A549 (cell line): ENCODE measurements at regions of chr9 and their contacts with region 1.

Region 1: DNA sequence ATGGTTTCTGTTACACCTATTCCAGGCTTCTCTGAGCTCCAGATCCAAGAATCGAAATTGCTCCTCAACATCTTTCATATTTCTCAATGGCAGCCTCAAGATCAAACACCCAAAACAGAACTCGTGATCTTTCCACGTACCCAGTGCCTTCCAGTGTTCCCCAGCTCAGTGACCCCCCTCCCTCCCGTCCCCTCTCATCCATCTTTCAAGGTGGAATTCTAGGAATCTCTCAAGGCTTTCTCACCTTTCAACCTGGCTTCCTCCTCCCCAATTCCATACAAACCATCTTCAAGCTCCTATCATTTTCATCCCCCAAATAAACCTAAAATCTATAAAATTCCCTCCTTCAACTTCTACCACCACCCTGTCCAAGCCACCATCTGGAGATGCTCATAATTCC is 615.3 kb downstream of the BNC2 start:
- DNase-seq: no peak
- ATAC-seq: no peak
- H3K4me3 ChIP-seq: no peak overlapping the region
- H3K27ac ChIP-seq: peak overlapping the region in 1 of 2 experiments; percentile 28; a peak in 1 of 6 replicates
- H3K4me1 ChIP-seq: no peaks in the 10 kb centered on the region
- CTCF ChIP-seq: no peak
- EP300 ChIP-seq: no peak
- POLR2A ChIP-seq: no peak
- RAD21 ChIP-seq: no peak

Region 2: DNA sequence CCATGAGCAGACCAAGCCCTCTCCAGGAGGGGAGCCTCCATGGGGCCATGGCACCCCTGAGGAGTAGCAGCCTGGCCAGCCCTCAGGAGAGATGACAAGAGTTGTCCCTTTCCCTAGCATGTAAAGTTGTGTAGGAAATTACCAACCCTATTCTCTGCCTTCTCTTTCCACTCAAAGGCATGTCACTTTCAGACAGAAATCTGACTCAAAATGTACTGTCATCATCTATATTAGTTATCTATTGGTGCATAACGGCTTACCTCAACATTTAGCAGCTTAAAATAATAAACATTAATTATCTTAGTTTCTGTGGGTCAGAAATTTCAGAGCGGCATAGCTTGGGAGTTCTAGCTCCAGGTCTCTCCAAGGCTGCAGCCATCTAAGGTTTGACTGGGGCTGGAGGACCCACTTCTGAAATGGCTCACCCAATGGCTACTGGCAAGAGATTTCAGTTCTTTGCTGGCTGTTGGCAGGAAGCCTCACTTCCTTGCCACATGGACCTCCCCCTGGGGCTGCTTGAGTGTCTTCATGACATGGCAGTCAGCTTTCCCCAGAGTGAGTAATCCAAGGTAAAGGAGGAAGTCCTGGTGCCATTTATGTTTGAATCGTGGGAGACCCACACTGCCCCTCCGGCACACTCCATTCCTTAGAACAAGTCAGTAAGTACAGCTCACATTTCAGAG is 70.1 kb before region 1 on chr9:
- CTCF ChIA-PET with region 1: no interaction called
- POLR2A ChIA-PET with region 1: no interaction called
- DNase-seq: peak in 1 of 2 experiments; percentile 17
- ATAC-seq: no peak
- H3K4me3 ChIP-seq: no peak overlapping the region
- H3K27ac ChIP-seq: no peak overlapping the region
- H3K4me1 ChIP-seq: no peaks in the 10 kb centered on the region
- CTCF ChIP-seq: no peak
- EP300 ChIP-seq: no peak
- POLR2A ChIP-seq: no peak
- RAD21 ChIP-seq: no peak

Region 3: DNA sequence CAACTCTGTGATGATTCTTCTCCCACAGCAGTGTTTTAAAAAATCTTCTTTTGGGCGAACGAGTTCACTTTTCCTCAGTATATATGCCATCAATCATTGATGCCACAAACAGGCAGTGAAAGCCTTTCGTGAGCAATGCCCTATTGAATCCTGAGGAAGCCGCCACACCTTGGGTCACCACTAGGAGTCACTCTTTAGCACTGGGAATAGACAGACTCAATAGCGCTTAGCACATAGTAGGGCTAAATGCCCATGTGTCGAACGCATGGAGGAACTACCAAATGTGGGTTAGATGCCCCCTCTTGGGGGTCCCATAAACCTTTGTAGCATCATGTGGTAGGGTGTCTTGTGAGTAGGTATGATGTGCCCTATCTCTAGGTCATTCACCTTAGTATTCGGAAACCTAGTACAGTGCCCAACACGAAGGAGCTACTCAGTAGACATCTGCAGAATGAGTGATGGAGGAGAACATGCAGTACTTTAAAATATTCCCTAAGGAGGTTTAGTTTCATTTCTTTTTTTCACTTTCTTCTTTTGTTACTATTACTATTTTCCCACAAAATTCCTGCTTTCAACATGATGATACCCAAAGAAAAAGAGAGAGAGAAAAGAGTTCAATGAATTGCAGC is 11.5 kb after region 1 on chr9:
- CTCF ChIA-PET with region 1: interaction called, 17 read pairs
- POLR2A ChIA-PET with region 1: no interaction called
- DNase-seq: peak in 1 of 2 experiments; percentile 45
- ATAC-seq: peak in 1 of 2 experiments; percentile 60; a peak in 3 of 6 replicates
- H3K4me3 ChIP-seq: no peak overlapping the region
- H3K27ac ChIP-seq: peak overlapping the region; percentile 57 to 80
- H3K4me1 ChIP-seq: peaks cover 30% of the 10 kb centered on the region
- CTCF ChIP-seq: peak; percentile 63
- EP300 ChIP-seq: no peak
- POLR2A ChIP-seq: no peak
- RAD21 ChIP-seq: peak; percentile 53 to 61

Region 4: DNA sequence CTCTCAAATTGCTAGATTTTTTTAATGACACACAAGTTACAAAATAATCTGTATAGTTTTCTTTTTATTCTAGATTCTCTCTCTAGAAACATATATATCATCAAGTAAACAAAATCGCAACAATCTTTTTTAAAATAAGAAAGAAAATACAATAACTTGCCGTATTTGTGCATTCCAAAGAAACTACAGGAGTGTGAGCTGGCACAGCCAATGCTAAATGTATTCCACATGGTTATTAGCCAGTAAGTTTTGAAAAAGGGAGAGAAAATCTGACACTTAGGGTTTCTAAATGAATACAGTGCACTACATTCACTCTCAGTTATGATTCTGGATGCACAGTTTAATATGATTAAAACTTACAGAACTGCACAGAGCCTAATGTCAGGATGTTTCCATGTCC is 497.4 kb after region 1 on chr9:
- CTCF ChIA-PET with region 1: no interaction called
- POLR2A ChIA-PET with region 1: no interaction called
- DNase-seq: no peak
- ATAC-seq: no peak
- H3K4me3 ChIP-seq: no peak overlapping the region
- H3K27ac ChIP-seq: no peak overlapping the region
- H3K4me1 ChIP-seq: 0 out of 3 replicates have a peak, but pooled peaks cover 4% of the 10 kb centered on the region
- CTCF ChIP-seq: no peak
- EP300 ChIP-seq: no peak
- POLR2A ChIP-seq: no peak
- RAD21 ChIP-seq: no peak